ENCODE measurements at regions of chr9 and their contacts with region 1.

Region 1: DNA sequence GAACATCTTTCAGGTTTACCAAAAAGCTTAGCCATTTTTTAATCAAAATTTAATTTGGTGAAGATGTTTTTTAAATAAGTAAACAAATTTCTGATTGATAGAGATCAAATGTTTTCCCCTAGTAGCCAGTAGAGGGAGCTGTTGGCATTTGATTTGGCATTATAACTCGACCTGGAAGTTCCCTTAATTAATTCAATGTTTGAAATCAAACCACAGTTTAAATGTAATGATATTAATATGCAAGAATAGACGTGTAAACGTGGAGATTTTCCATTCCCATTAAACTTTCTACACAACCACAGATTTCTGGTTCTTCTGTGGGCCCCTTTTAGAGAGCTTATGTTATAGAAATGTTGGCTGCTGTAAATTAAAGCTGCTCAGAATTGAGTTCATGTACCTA is 148.1 kb upstream of the MPDZ start:
- DNase-seq: no peak
- H3K4me3 Mint-ChIP-seq: no peak overlapping the region
- H3K27ac Mint-ChIP-seq: no peak overlapping the region
- H3K4me1 Mint-ChIP-seq: no peaks in the 10 kb centered on the region
- H3K27me3 Mint-ChIP-seq: no peaks in the 10 kb centered on the region

Region 2: GRCh38 chr9:13750061-13750460 is 322.5 kb after region 1 on chr9:
- CTCF ChIA-PET with region 1: no interaction called
- DNase-seq: no peak
- H3K4me3 Mint-ChIP-seq: no peak overlapping the region
- H3K27ac Mint-ChIP-seq: no peak overlapping the region
- H3K4me1 Mint-ChIP-seq: no peaks in the 10 kb centered on the region
- H3K27me3 Mint-ChIP-seq: no peaks in the 10 kb centered on the region

Region 3: GRCh38 chr9:14353222-14354056 is 925.9 kb after region 1 on chr9:
- CTCF ChIA-PET with region 1: interaction called, 31 read pairs
- DNase-seq: peak; percentile 84
- H3K4me3 Mint-ChIP-seq: no peak overlapping the region
- H3K27ac Mint-ChIP-seq: no peak overlapping the region
- H3K4me1 Mint-ChIP-seq: no peaks in the 10 kb centered on the region
- H3K27me3 Mint-ChIP-seq: peaks cover 18% of the 10 kb centered on the region

Region 4: DNA sequence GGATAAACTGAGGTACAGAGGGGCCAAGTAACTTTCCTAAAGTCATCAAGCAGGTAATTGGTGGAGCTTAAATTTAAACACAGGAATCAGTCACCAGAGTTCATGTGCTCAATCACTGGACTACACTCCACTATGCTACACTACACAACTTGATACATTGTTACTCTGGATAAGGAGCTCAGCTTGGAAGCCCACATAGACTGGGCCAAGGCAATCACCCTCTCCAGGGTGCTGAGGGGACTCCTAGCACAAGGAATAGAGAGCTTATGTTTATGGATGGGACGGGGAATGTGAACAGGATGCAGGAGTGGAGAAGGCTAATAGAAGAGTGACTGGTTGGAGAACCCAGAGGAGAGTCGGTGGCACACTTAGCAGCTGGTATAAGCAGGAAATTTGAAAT is 999.8 kb after region 1 on chr9:
- CTCF ChIA-PET with region 1: interaction called, 11 read pairs
- DNase-seq: no peak
- H3K4me3 Mint-ChIP-seq: no peak overlapping the region
- H3K27ac Mint-ChIP-seq: no peak overlapping the region
- H3K4me1 Mint-ChIP-seq: no peaks in the 10 kb centered on the region
- H3K27me3 Mint-ChIP-seq: peaks cover 2% of the 10 kb centered on the region

Measured in activated naive CD4-positive, alpha-beta T cell treated with anti-CD3 and anti-CD28 coated beads, Interleukin-2, amount 10 ng/mL, durations not matched to agents 7 days and 5 days (primary cell).